ENCODE measurements at regions of chr12 and their contacts with region 1.

Region 1: GRCh38 chr12:97097734-97098133 is 190.7 kb downstream of the NEDD1 start:
- DNase-seq: no peak
- ATAC-seq: no peak
- H3K4me3 ChIP-seq: no peak overlapping the region
- H3K27ac ChIP-seq: no peak overlapping the region
- H3K4me1 ChIP-seq: no peaks in the 10 kb centered on the region
- H3K27me3 ChIP-seq: no peaks in the 10 kb centered on the region
- CTCF ChIP-seq: no peak
- POLR2A ChIP-seq: no peak
- RAD21 ChIP-seq: no peak

Region 2: GRCh38 chr12:96314723-96315122 is 783.0 kb before region 1 on chr12:
- CTCF ChIA-PET with region 1: no interaction called
- POLR2A ChIA-PET with region 1: no interaction called
- dilution Hi-C with region 1: no loop called
- in situ Hi-C with region 1: no loop called
- intact Hi-C with region 1: no loop called
- DNase-seq: peak; percentile 19
- ATAC-seq: peak; percentile 44; the same call in 1 of the 2 replicates
- H3K4me3 ChIP-seq: no peak overlapping the region
- H3K27ac ChIP-seq: no peak overlapping the region
- H3K4me1 ChIP-seq: no peaks in the 10 kb centered on the region; the same call in 1 of the 2 replicates
- H3K27me3 ChIP-seq: no peaks in the 10 kb centered on the region
- CTCF ChIP-seq: no peak
- POLR2A ChIP-seq: no peak
- RAD21 ChIP-seq: no peak

Region 3: GRCh38 chr12:96571101-96571862 is 526.5 kb before region 1 on chr12:
- CTCF ChIA-PET with region 1: no interaction called
- POLR2A ChIA-PET with region 1: no interaction called
- dilution Hi-C with region 1: no loop called
- in situ Hi-C with region 1: no loop called
- intact Hi-C with region 1: no loop called
- DNase-seq: no peak
- ATAC-seq: no peak
- H3K4me3 ChIP-seq: no peak overlapping the region
- H3K27ac ChIP-seq: no peak overlapping the region
- H3K4me1 ChIP-seq: no peaks in the 10 kb centered on the region
- H3K27me3 ChIP-seq: no peaks in the 10 kb centered on the region
- CTCF ChIP-seq: no peak
- POLR2A ChIP-seq: no peak
- RAD21 ChIP-seq: no peak

Region 4: DNA sequence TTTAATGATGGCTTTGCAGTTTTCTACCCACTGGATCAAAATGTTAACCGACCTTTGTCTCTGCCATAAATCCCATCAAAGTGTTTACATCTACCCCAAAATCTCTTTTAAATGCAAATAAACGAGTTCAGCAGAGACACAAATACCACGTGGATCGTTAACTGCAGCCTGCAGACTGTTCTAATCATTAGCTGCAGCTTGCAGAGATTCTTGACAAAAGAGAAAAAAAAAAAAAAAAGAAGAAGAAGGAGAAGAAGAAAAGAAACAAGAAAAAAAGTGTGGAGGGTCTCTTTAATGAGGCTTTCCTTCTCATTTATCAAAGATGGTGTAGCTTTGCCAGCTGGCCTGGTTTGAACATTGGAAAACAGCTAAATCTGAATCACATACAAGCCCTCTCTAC is 85.0 kb after region 1 on chr12:
- CTCF ChIA-PET with region 1: no interaction called
- POLR2A ChIA-PET with region 1: interaction called, 11 read pairs
- dilution Hi-C with region 1: no loop called
- in situ Hi-C with region 1: no loop called
- intact Hi-C with region 1: no loop called
- DNase-seq: no peak
- ATAC-seq: no peak
- H3K4me3 ChIP-seq: no peak overlapping the region
- H3K27ac ChIP-seq: no peak overlapping the region
- H3K4me1 ChIP-seq: no peaks in the 10 kb centered on the region
- H3K27me3 ChIP-seq: no peaks in the 10 kb centered on the region
- CTCF ChIP-seq: no peak
- POLR2A ChIP-seq: no peak
- RAD21 ChIP-seq: no peak

Region 5: DNA sequence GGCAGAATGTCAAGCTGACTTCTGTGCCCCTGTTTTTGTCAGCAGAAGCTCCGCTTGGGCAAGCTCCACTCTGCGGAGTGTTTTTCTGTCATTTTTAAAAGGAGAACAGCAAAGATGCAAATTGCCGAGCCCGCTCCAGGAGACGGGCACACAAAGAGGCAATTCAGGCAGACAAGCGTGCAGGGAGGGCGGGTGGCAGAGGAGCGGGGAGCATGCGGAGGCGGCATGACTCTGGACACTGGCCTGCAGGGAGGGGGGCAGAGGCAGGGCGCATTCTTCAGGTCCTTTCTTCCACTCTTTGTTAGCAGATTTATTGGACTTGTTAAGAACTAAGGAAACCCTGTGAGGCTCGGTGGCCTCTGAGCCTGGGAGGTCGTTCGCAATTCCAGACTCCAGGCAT is 177.5 kb after region 1 on chr12:
- CTCF ChIA-PET with region 1: no interaction called
- POLR2A ChIA-PET with region 1: no interaction called
- dilution Hi-C with region 1: no loop called
- in situ Hi-C with region 1: no loop called
- intact Hi-C with region 1: no loop called
- DNase-seq: no peak
- ATAC-seq: no peak
- H3K4me3 ChIP-seq: no peak overlapping the region
- H3K27ac ChIP-seq: no peak overlapping the region
- H3K4me1 ChIP-seq: no peaks in the 10 kb centered on the region
- H3K27me3 ChIP-seq: no peaks in the 10 kb centered on the region
- CTCF ChIP-seq: no peak
- POLR2A ChIP-seq: no peak
- RAD21 ChIP-seq: no peak

Region 6: GRCh38 chr12:97545786-97546185 is 448.1 kb after region 1 on chr12:
- CTCF ChIA-PET with region 1: no interaction called
- POLR2A ChIA-PET with region 1: no interaction called
- dilution Hi-C with region 1: no loop called
- in situ Hi-C with region 1: no loop called
- intact Hi-C with region 1: no loop called
- DNase-seq: no peak
- ATAC-seq: no peak
- H3K4me3 ChIP-seq: no peak overlapping the region
- H3K27ac ChIP-seq: no peak overlapping the region
- H3K4me1 ChIP-seq: no peaks in the 10 kb centered on the region
- H3K27me3 ChIP-seq: no peaks in the 10 kb centered on the region
- CTCF ChIP-seq: no peak
- POLR2A ChIP-seq: no peak
- RAD21 ChIP-seq: no peak

Measured in IMR-90 (cell line).